Sigmoid colon (tissue), 7 donors: ENCODE measurements at regions of chr1 and their contacts with region 1.

Region 1: GRCh38 chr1:1441002-1441888 is 5.8 kb downstream of the VWA1 start:
- DNase-seq: no peak
- H3K4me3 ChIP-seq: no peak overlapping the region
- H3K27ac ChIP-seq: peak overlapping the region; percentile 34 to 68 (median 49)
- H3K4me1 ChIP-seq: peaks cover 0 to 49% (median 45%) of the 10 kb centered on the region in 4 donors
- H3K27me3 ChIP-seq: no peaks in the 10 kb centered on the region
- CTCF ChIP-seq: peak; percentile 88 to 98 (median 96)
- EP300 ChIP-seq: no peak
- POLR2A ChIP-seq: no peak

Region 2: GRCh38 chr1:1399187-1399871 is 41.9 kb before region 1 on chr1 and contains the start of gene CCNL2:
- intact Hi-C with region 1: loop called (anchors 1 kb)
- DNase-seq: peak; percentile 99
- H3K4me3 ChIP-seq: peak within 1 kb of the TSS; percentile 72 to 94 (median 86)
- H3K27ac ChIP-seq: peak within 1 kb of the TSS; percentile 81 to 91 (median 88)
- H3K4me1 ChIP-seq: peaks cover 0 to 52% (median 27%) of the 10 kb centered on the region in 4 donors
- H3K27me3 ChIP-seq: no peaks in the 10 kb centered on the region
- CTCF ChIP-seq: peak; percentile 53 to 84 (median 70)
- EP300 ChIP-seq: no peak
- POLR2A ChIP-seq: peak; percentile 11 to 23
- total RNA-seq, gene CCNL2: 139 to 375 (median 173) TPM

Region 3: DNA sequence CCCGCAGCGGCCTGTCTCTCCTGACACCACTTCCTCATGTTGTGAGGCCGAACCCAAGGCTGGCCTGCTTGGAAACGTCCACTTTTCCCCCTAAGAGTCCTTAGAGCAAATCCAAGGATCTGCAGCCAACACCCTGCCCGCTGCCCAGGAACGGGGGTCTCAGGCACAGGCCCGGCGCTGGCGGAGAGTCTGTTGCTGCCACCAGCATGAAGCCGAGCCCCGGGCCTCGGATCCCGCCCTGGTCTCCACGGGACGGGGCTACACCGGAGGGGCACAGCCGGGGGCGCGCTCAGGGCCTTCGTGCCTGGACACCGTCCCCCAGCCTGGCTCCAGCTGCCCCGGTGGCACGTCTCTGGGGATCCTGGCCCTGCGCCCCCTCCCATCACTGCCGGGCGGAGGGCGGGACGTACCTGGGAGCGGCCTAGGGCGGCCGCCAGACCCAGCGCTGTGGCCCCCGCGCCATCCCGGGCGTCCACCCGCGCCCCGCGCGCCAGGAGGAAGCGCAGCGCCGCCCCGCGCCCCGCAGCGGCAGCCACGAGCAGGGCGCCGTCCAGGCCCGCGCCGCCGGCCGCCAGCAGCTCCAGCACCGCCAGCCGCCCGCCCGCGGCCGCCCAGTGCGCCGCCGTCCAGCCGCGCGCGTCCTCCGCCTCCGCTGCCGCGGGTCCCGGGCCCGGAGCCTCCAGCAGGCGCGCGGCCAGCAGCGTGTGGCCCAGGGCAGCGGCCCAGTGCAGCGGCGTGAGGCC is 21.4 kb before region 1 on chr1:
- intact Hi-C with region 1: loop called (anchors 2 kb)
- DNase-seq: no peak
- H3K4me3 ChIP-seq: peak overlapping the region; percentile 24 to 60 (median 54)
- H3K27ac ChIP-seq: peak overlapping the region; percentile 62 to 87 (median 84)
- H3K4me1 ChIP-seq: peaks cover 0 to 31% (median 23%) of the 10 kb centered on the region in 4 donors
- H3K27me3 ChIP-seq: no peaks in the 10 kb centered on the region
- CTCF ChIP-seq: no peak
- EP300 ChIP-seq: no peak
- POLR2A ChIP-seq: no peak